Activated CD8-positive, alpha-beta T cell treated with anti-CD3 and anti-CD28 coated beads for 36 hours (primary cell): ENCODE measurements at regions of chr4 and their contacts with region 1.

Region 1: DNA sequence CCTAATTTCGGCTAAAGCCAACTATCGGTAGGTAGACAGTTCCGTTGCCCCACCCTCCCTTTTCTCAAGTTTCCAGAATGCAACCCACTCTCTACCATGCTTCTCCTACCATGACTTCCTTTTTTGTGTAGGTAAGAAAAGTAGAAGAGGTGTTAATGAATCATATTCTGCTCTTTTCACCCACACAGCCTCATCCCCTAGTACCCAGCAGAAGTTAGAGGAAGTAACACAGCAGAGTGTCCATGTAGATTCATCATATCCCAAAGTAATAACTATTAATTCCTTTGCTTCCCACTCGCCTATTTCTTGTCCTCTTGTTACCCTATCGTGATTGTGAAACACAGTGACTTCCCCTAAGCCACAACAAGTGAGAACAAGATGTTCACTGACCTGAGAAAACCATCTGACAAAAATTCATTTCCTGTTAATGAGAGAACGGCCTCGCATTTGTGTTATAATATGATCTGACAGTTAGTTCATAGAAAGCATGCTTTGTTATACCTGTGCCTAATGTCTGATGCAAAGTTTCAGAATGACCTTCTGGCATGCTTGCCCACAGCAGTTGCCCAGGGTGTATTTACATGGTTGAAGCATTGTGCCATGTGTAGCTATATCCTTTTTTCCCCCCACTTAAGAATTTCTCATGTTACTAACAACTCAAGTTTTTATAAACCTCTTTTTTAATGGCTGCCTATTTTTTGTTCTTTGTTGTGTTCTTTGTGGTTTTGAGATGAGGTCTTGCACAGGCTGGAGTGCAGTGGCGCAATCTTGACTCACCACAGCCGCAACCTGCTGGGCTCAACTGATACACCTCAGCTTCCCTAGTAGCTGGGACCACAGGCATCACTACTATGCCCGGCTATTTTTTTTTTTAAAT is 185.6 kb downstream of the RAP1GDS1 start:
- DNase-seq: peak; percentile 85
- ATAC-seq: peak; percentile 88
- H3K4me3 Mint-ChIP-seq: peak overlapping the region; percentile 58
- H3K27ac Mint-ChIP-seq: peak overlapping the region; percentile 96
- H3K4me1 Mint-ChIP-seq: peaks cover 35% of the 10 kb centered on the region
- H3K27me3 Mint-ChIP-seq: no peaks in the 10 kb centered on the region
- CTCF ChIP-seq: no peak

Region 2: GRCh38 chr4:98143001-98143899 is 303.5 kb before region 1 on chr4 and contains the start of gene STPG2:
- CTCF ChIA-PET with region 1: interaction called, 3 read pairs
- POLR2A ChIA-PET with region 1: no interaction called
- intact Hi-C with region 1: loop called (anchors 10 kb)
- DNase-seq: peak; percentile 94
- ATAC-seq: peak; percentile 100
- H3K4me3 Mint-ChIP-seq: peak within 1 kb of the TSS; percentile 86
- H3K27ac Mint-ChIP-seq: peak within 1 kb of the TSS; percentile 97
- H3K4me1 Mint-ChIP-seq: peaks cover 15% of the 10 kb centered on the region
- H3K27me3 Mint-ChIP-seq: no peaks in the 10 kb centered on the region
- CTCF ChIP-seq: peak; percentile 73
- total RNA-seq, gene STPG2: 0.16 to 0.18 TPM

Region 3: GRCh38 chr4:98467627-98468072 is 20.9 kb after region 1 on chr4:
- CTCF ChIA-PET with region 1: interaction called, 11 read pairs
- POLR2A ChIA-PET with region 1: no interaction called
- intact Hi-C with region 1: no loop called
- DNase-seq: peak; percentile 83
- ATAC-seq: peak; percentile 95
- H3K4me3 Mint-ChIP-seq: peak overlapping the region; percentile 66
- H3K27ac Mint-ChIP-seq: no peak overlapping the region
- H3K4me1 Mint-ChIP-seq: peaks cover 27% of the 10 kb centered on the region
- H3K27me3 Mint-ChIP-seq: no peaks in the 10 kb centered on the region
- CTCF ChIP-seq: peak; percentile 65

Region 4: DNA sequence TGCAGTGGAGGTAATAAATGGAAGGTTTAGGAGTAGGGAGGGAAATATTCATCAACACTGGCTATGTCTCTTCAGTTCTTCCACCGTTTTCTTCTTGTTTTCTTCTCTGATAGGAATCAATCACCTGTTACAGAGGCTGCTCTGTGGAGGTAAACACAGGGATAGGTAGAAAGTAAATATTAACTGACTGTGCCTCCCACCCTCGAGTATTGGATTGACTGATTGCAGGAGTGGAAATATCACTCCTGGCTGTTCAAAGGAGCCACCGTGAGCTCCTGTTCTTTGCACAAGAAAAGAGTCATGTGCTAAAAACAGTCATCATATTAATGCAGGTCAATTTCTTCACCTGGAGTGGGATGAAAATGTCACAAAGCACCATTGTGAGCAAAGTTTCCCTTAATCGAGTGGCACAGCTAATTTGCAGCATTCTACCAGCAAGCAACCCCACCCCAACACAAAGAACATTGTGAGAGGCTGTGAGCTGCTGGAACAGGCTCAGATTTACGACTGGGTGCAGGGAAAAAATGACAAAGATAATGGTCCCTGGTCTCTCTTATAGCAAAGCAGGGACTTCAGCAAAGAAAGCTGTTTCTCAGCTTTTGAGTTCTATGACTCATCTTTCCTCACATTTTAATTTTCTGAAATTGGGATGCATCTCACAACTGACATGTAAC is 325.4 kb after region 1 on chr4:
- CTCF ChIA-PET with region 1: no interaction called
- POLR2A ChIA-PET with region 1: no interaction called
- intact Hi-C with region 1: no loop called
- DNase-seq: no peak
- ATAC-seq: no peak
- H3K4me3 Mint-ChIP-seq: no peak overlapping the region
- H3K27ac Mint-ChIP-seq: no peak overlapping the region
- H3K4me1 Mint-ChIP-seq: no peaks in the 10 kb centered on the region
- H3K27me3 Mint-ChIP-seq: no peaks in the 10 kb centered on the region
- CTCF ChIP-seq: no peak

Region 5: DNA sequence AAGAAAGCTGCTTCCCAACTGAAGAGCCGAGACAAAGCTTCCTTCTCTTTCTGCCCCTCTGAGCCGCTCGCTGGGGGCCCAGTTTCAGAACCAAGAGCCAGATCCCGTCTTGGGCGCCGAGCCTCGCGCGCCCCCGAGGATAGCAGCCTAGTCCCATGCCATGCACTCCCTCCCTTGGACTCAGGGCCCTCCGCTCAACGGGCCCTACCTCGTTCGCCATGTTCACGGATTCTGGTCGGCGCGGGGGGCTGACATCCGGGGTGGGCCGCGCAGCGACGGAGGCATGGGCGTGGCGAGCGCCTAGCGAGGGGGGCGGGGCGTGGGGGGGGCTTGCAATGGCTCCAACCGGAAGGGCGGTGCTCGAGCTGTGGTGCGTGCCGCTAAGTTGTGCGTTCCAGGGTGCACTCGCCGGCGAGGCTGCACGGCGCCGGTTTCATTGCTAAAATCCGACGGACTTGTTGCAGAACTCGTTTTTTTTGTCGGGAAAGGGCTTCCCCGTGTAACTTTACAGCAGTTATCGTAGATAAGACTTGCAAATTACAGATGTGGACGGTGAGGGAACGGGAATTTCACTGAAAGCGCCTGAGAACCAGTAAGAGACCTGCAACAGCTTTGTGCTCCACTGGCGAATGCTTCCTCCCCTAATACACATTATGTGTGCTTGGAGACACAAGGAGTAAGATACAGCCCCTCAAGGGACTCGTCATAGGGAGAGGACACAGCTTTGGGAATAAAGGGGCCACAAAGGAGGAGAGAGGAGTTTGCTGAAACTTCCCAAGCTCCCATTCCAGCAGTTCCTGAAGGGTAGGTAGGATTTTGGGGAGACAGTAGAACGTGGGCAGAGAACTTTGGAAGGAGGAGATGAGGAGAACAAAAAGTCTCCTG is 642.0 kb after region 1 on chr4 and contains the start of gene ADH5:
- CTCF ChIA-PET with region 1: no interaction called
- POLR2A ChIA-PET with region 1: no interaction called
- intact Hi-C with region 1: no loop called
- DNase-seq: peak; percentile 95
- ATAC-seq: peak; percentile 97
- H3K4me3 Mint-ChIP-seq: peak within 1 kb of the TSS; percentile 93
- H3K27ac Mint-ChIP-seq: peak within 1 kb of the TSS; percentile 93
- H3K4me1 Mint-ChIP-seq: peaks cover 27% of the 10 kb centered on the region
- H3K27me3 Mint-ChIP-seq: no peaks in the 10 kb centered on the region
- CTCF ChIP-seq: no peak
- total RNA-seq, gene ADH5: 114 to 118 TPM